Naive thymus-derived CD4-positive, alpha-beta T cell (primary cell): ENCODE measurements at regions of chr6 and their contacts with region 1.

Region 1: DNA sequence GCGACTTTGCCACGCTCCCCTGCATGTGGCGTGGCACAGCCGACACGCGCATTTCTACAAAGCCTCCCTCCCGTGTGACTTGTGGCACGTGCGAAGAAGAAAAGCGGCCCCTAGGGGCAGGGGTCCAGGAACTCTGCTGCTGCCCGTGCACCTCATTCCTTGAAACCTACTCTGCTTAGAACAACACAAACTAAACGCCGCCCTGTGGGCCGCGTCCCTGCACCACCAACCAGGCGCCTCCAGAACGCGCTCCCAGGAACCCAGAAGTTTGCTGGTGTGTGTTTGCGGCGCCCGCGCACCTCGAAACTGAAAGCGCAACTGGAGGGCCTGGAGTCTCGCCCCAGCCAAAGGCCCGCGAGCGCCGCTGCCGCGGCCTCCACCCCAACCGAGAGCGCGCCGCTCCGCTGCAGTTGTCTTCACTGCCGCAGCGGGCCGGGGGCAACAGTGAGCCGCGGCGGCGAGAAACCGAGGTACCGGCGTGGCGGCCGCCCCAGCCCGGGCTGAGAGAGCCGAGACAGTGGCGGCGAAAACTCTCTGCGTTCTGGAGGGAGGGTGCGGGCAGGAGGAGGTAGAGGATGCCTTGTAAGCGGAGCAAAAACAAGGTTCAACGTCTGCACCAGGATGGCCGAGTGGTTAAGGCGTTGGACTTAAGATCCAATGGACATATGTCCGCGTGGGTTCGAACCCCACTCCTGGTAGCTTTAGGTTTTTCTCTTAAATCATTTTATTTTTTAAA is 65.8 kb downstream of the STX11 start:
- DNase-seq: peak; percentile 84 to 96 (median 94)
- ATAC-seq: peak; percentile 91
- H3K4me3 ChIP-seq: peak overlapping the region; percentile 73
- H3K4me3 Mint-ChIP-seq: peak overlapping the region; percentile 84 to 99 (median 97)
- H3K27ac ChIP-seq: peak overlapping the region; percentile 86
- H3K27ac Mint-ChIP-seq: peak overlapping the region; percentile 91 to 100 (median 100)
- H3K4me1 ChIP-seq: peaks cover 15 to 18% of the 10 kb centered on the region in 2 donors
- H3K4me1 Mint-ChIP-seq: peaks cover 12 to 48% (median 40%) of the 10 kb centered on the region in 7 donors
- H3K27me3 ChIP-seq: no peaks in the 10 kb centered on the region
- H3K27me3 Mint-ChIP-seq: peaks cover 0 to 12% (median 0%) of the 10 kb centered on the region in 5 donors

Region 2: GRCh38 chr6:143450453-143451371 is 765.4 kb before region 1 on chr6 and contains the starts of genes ADAT2 and PEX3:
- CTCF ChIA-PET with region 1: no interaction called
- POLR2A ChIA-PET with region 1: no interaction called
- intact Hi-C with region 1: loop called (anchors 1 kb)
- DNase-seq: peak; percentile 87 to 95 (median 94)
- ATAC-seq: peak; percentile 98
- H3K4me3 ChIP-seq: peak within 1 kb of the TSS; percentile 89
- H3K4me3 Mint-ChIP-seq: peak within 1 kb of the TSS; percentile 84 to 100 (median 99)
- H3K27ac ChIP-seq: peak within 1 kb of the TSS; percentile 80
- H3K27ac Mint-ChIP-seq: peak within 1 kb of the TSS; percentile 93 to 99 (median 96)
- H3K4me1 ChIP-seq: peaks cover 14 to 18% of the 10 kb centered on the region in 2 donors
- H3K4me1 Mint-ChIP-seq: peaks cover 20 to 61% (median 49%) of the 10 kb centered on the region in 7 donors
- H3K27me3 ChIP-seq: no peaks in the 10 kb centered on the region
- H3K27me3 Mint-ChIP-seq: no peaks in the 10 kb centered on the region
- total RNA-seq, gene ADAT2: 18.4 to 25.8 (median 20.8) TPM
- total RNA-seq, gene PEX3: 10.9 to 28.8 (median 19.1) TPM

Region 3: DNA sequence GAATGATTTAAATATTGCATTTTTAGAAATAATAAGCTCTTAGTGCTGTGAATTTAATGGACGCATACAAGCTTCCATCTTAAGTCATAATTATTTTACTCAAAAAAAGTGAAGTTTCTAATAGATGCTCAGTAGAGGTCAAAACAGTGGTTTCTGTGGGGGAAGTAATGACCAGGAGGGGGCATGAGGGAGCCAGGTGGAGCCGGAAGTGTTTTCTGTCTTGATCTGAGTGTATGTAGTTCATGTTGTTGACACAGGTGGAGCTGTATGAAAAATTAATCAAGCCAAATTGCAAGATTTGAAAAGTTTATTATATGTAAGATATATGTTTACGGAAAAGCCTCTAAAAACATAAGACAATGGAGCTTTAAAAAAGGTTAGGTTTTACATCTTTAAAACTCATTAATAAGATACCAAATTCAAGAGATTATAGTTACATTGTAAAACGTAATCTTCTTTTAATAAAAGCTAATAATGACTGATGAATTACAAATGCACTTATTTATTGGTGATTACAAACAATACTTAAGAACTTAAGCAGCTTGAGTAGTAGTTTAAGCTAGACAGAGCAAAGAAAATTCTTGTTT is 276.0 kb before region 1 on chr6:
- CTCF ChIA-PET with region 1: interaction called, 6 read pairs
- POLR2A ChIA-PET with region 1: no interaction called
- intact Hi-C with region 1: loop called (anchors 1 kb)
- DNase-seq: peak in 7 of 9 donors; percentile 44 to 69 (median 54)
- ATAC-seq: peak; percentile 96
- H3K4me3 ChIP-seq: no peak overlapping the region
- H3K4me3 Mint-ChIP-seq: no peak overlapping the region
- H3K27ac ChIP-seq: no peak overlapping the region
- H3K27ac Mint-ChIP-seq: no peak overlapping the region
- H3K4me1 ChIP-seq: no peaks in the 10 kb centered on the region
- H3K4me1 Mint-ChIP-seq: peaks cover 0 to 16% (median 6%) of the 10 kb centered on the region in 7 donors
- H3K27me3 ChIP-seq: no peaks in the 10 kb centered on the region
- H3K27me3 Mint-ChIP-seq: peaks cover 0 to 7% (median 0%) of the 10 kb centered on the region in 5 donors

Region 4: DNA sequence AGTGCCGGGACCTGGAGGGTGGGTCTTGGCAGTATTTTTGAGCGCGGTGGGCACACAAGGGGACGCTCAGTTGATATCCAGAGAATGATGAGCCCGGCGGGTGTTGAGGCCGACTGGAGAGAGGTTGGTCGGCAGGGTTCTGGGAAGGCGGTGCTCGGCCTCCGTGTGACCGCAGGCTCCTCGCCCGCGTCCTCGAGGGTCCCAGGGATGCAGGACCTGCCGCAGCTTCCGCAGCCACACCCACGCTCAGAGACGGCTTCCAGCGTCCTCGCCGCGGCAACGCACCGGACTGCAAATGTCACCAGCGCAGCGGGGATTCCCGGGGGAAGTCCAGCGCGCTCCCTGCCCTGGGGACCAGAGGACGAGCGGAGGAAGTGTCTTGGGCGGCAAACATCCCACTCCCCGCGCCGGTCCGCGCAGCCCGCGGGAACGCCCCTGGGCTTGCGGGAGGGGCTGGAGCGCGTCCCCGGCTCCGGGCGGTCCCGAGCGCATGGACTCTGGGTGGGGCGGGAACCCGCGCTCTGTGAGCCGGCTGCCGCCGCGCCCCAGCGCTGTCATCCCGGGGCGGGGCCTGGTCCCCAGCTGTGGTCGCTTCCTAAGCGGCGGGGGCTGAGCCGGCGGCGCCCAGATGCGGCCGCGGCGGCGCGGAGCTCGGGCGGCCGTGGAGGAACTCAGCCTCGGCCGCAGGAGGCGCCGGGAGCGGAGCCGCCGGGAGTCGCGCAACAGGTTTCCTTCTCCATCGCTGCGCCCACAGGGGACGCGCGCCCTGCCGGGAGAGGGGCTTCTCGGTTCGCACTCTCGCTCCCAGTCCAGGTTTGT is 66.0 kb before region 1 on chr6 and contains the start of gene STX11:
- CTCF ChIA-PET with region 1: interaction called, 6 read pairs
- POLR2A ChIA-PET with region 1: interaction called, 3 read pairs
- intact Hi-C with region 1: loop called (anchors 1 kb)
- DNase-seq: peak; percentile 37 to 88 (median 51)
- ATAC-seq: peak; percentile 86
- H3K4me3 ChIP-seq: peak within 1 kb of the TSS; percentile 69
- H3K4me3 Mint-ChIP-seq: peak within 1 kb of the TSS; percentile 91 to 98 (median 95)
- H3K27ac ChIP-seq: peak within 1 kb of the TSS; percentile 62
- H3K27ac Mint-ChIP-seq: peak within 1 kb of the TSS; percentile 89 to 98 (median 94)
- H3K4me1 ChIP-seq: peaks cover 0 to 17% of the 10 kb centered on the region in 2 donors
- H3K4me1 Mint-ChIP-seq: peaks cover 6 to 43% (median 15%) of the 10 kb centered on the region in 7 donors
- H3K27me3 ChIP-seq: no peaks in the 10 kb centered on the region
- H3K27me3 Mint-ChIP-seq: peaks cover 0 to 2% (median 0%) of the 10 kb centered on the region in 5 donors
- total RNA-seq, gene STX11: 2.6 to 60.5 (median 11.6) TPM

Region 5: DNA sequence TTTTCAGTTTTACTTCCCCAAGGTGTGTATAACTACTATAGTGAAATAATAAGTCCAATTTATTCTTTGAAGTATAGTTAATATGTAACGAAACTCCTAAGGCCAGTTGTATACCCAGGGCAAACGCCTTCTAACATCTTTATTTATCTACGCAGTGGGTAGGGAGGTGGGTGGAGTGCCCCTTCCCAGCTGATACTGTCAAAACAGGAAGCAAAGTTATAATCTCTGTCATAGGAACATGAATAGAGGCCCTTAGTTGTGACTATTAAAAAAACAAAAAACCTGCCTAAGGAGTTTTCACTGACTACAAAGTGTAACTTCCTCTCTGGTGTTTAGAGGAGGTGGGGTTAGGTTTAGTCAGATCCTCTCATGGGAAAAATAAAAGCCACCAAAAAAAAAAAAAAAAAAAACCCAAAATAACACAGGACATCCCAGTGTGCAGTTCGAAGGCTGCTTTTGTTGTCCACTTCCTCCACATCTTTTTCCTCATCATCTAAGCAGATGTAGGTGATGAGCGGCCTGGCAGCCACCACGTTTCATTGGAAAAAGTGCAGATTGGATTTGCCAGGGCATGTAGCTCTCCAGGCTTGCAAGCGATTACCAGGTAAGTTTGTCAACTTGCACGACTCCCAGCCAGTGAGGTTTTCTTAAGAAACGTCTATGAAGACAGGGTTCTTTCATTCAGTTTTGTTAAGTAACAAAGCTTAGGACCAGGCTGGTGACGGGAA is 127.8 kb after region 1 on chr6:
- CTCF ChIA-PET with region 1: interaction called, 3 read pairs
- POLR2A ChIA-PET with region 1: interaction called, 3 read pairs
- intact Hi-C with region 1: loop called (anchors 1 to 2 kb)
- DNase-seq: peak in 8 of 9 donors; percentile 37 to 85 (median 76)
- ATAC-seq: peak; percentile 88
- H3K4me3 ChIP-seq: peak overlapping the region; percentile 67
- H3K4me3 Mint-ChIP-seq: peak overlapping the region; percentile 80 to 99 (median 94)
- H3K27ac ChIP-seq: peak overlapping the region; percentile 75
- H3K27ac Mint-ChIP-seq: peak overlapping the region; percentile 87 to 99 (median 96)
- H3K4me1 ChIP-seq: peaks cover 58 to 62% of the 10 kb centered on the region in 2 donors
- H3K4me1 Mint-ChIP-seq: peaks cover 68 to 93% (median 84%) of the 10 kb centered on the region in 7 donors
- H3K27me3 ChIP-seq: no peaks in the 10 kb centered on the region
- H3K27me3 Mint-ChIP-seq: no peaks in the 10 kb centered on the region

Region 6: GRCh38 chr6:145734486-145735355 is 1518.6 kb after region 1 on chr6:
- CTCF ChIA-PET with region 1: no interaction called
- POLR2A ChIA-PET with region 1: no interaction called
- intact Hi-C with region 1: loop called (anchors 10 kb)
- DNase-seq: peak; percentile 50 to 78 (median 64)
- ATAC-seq: peak; percentile 79
- H3K4me3 ChIP-seq: peak overlapping the region; percentile 65
- H3K4me3 Mint-ChIP-seq: peak overlapping the region; percentile 87 to 100 (median 98)
- H3K27ac ChIP-seq: peak overlapping the region; percentile 92
- H3K27ac Mint-ChIP-seq: peak overlapping the region; percentile 90 to 99 (median 97)
- H3K4me1 ChIP-seq: peaks cover 0 to 5% of the 10 kb centered on the region in 2 donors
- H3K4me1 Mint-ChIP-seq: peaks cover 0 to 29% (median 9%) of the 10 kb centered on the region in 7 donors
- H3K27me3 ChIP-seq: no peaks in the 10 kb centered on the region
- H3K27me3 Mint-ChIP-seq: no peaks in the 10 kb centered on the region

Region 7: GRCh38 chr6:146123616-146124015 is 1907.5 kb after region 1 on chr6:
- CTCF ChIA-PET with region 1: no interaction called
- POLR2A ChIA-PET with region 1: no interaction called
- intact Hi-C with region 1: no loop called
- DNase-seq: no peak
- ATAC-seq: no peak
- H3K4me3 ChIP-seq: no peak overlapping the region
- H3K4me3 Mint-ChIP-seq: no peak overlapping the region
- H3K27ac ChIP-seq: no peak overlapping the region
- H3K27ac Mint-ChIP-seq: no peak overlapping the region
- H3K4me1 ChIP-seq: no peaks in the 10 kb centered on the region
- H3K4me1 Mint-ChIP-seq: no peaks in the 10 kb centered on the region
- H3K27me3 ChIP-seq: no peaks in the 10 kb centered on the region
- H3K27me3 Mint-ChIP-seq: peaks cover 0 to 21% (median 7%) of the 10 kb centered on the region in 5 donors